Natural killer cell (primary cell): ENCODE measurements at regions of chr4 and their contacts with region 1.

Region 1: GRCh38 chr4:42865572-42866189 is 26.8 kb upstream of the GRXCR1 start:
- DNase-seq: peak in 1 of 2 donors; percentile 71
- ATAC-seq: peak in 2 of 3 donors; percentile 50 to 61
- H3K4me3 ChIP-seq: no peak overlapping the region
- H3K4me3 Mint-ChIP-seq: no peak overlapping the region
- H3K27ac ChIP-seq: no peak overlapping the region
- H3K27ac Mint-ChIP-seq: no peak overlapping the region
- H3K4me1 ChIP-seq: no peaks in the 10 kb centered on the region
- H3K4me1 Mint-ChIP-seq: peaks cover 0 to 7% of the 10 kb centered on the region in 2 donors
- H3K27me3 ChIP-seq: peaks cover 7% of the 10 kb centered on the region
- H3K27me3 Mint-ChIP-seq: peaks cover 3 to 19% of the 10 kb centered on the region in 2 donors
- CTCF ChIP-seq: peak; percentile 75

Region 2: GRCh38 chr4:42282081-42282901 is 583.4 kb before region 1 on chr4:
- intact Hi-C with region 1: loop called (anchors 5 kb)
- DNase-seq: peak in 1 of 2 donors; percentile 64
- ATAC-seq: peak in 2 of 3 donors; percentile 64 to 77
- H3K4me3 ChIP-seq: no peak overlapping the region
- H3K4me3 Mint-ChIP-seq: no peak overlapping the region
- H3K27ac ChIP-seq: no peak overlapping the region
- H3K27ac Mint-ChIP-seq: no peak overlapping the region
- H3K4me1 ChIP-seq: peaks cover 7% of the 10 kb centered on the region
- H3K4me1 Mint-ChIP-seq: peaks cover 7 to 12% of the 10 kb centered on the region in 2 donors
- H3K27me3 ChIP-seq: no peaks in the 10 kb centered on the region
- H3K27me3 Mint-ChIP-seq: peaks cover 7% of the 10 kb centered on the region in 2 donors
- CTCF ChIP-seq: peak; percentile 40

Region 3: DNA sequence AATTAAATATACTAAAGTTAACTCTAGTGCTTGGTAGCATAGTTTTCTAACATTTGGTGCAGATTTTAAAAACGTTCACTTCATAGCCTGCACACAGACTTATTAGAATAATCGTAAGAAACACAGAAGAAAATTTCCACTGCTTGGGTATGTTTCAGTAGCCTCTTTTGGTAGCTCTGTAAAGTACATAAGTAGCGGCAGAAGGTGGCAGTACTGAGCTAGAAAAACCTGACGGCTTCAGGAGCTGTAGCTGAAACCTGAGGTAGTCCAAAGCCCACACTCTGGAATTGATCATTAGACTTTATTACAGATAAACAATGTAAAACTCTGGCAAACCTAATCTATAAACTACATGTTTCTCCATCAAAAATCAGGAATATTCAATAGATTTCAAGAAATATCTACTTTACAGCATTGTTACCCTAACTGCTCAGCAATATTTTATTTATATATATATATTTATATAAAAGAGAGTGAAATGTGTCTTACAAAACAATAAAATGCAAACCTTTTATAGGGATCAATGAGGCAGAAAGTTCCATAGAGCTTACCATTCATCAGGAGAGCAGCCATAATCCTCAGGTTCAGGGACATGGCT is 297.0 kb before region 1 on chr4:
- intact Hi-C with region 1: loop called (anchors 1 kb)
- DNase-seq: peak; percentile 24 to 86
- ATAC-seq: peak; percentile 85 to 93 (median 93)
- H3K4me3 ChIP-seq: no peak overlapping the region
- H3K4me3 Mint-ChIP-seq: no peak overlapping the region
- H3K27ac ChIP-seq: no peak overlapping the region
- H3K27ac Mint-ChIP-seq: no peak overlapping the region
- H3K4me1 ChIP-seq: no peaks in the 10 kb centered on the region
- H3K4me1 Mint-ChIP-seq: no peaks in the 10 kb centered on the region
- H3K27me3 ChIP-seq: no peaks in the 10 kb centered on the region
- H3K27me3 Mint-ChIP-seq: no peaks in the 10 kb centered on the region
- CTCF ChIP-seq: peak; percentile 86